Activated naive CD8-positive, alpha-beta T cell treated with anti-CD3 and anti-CD28 coated beads, Interleukin-2, amount 10 ng/mL, durations not matched to agents 7 days and 5 days (primary cell): ENCODE measurements at regions of chr16 and their contacts with region 1.

Region 1: DNA sequence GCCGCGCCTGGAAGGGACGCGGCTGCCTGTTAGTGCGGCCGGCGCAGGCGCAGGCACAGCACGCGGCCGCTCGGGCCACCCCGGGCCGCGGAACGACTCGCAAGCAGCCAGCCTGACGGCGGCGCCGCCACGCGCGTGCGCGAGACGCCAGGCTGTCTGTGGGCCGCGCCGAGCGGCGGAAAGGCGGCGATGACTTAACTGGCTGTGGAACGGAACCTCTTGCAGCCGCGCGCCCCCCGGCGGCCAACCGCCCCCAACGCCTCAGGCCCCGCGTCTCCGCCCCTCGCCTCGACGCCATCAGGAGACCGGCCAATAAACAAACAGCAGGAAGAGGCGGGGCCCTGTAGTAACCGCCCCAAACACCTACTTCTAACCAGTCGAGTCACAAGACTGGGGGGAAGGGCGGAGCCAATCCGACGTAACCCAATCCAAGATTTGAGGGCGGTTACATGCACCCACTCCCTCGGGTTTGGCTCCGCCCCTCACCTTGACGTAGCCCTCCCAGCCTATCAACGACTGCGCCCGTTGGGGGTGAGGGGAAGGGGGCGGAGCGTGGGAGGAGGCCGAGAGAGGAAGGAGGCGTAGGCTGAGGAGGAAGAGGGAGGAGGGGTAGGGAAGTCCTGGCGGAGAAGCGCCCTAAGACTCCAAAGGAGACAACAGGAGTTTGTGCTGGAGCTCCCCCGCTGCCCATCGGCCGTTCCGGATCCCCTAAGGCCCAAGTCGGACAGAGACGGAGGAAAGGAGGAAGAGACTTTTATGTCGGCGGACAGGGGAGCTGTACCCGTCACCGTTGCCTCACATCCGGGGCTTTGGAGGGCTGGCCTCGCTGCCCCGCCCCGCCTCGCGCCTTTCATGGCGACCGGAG is at the start of gene FBRS:
- DNase-seq: peak; percentile 99
- ATAC-seq: peak; percentile 69
- H3K4me3 Mint-ChIP-seq: peak within 1 kb of the TSS; percentile 93
- H3K27ac Mint-ChIP-seq: peak within 1 kb of the TSS; percentile 100
- H3K4me1 Mint-ChIP-seq: peaks cover 30% of the 10 kb centered on the region
- H3K27me3 Mint-ChIP-seq: no peaks in the 10 kb centered on the region
- total RNA-seq, gene FBRS: 140 to 143 TPM

Region 2: DNA sequence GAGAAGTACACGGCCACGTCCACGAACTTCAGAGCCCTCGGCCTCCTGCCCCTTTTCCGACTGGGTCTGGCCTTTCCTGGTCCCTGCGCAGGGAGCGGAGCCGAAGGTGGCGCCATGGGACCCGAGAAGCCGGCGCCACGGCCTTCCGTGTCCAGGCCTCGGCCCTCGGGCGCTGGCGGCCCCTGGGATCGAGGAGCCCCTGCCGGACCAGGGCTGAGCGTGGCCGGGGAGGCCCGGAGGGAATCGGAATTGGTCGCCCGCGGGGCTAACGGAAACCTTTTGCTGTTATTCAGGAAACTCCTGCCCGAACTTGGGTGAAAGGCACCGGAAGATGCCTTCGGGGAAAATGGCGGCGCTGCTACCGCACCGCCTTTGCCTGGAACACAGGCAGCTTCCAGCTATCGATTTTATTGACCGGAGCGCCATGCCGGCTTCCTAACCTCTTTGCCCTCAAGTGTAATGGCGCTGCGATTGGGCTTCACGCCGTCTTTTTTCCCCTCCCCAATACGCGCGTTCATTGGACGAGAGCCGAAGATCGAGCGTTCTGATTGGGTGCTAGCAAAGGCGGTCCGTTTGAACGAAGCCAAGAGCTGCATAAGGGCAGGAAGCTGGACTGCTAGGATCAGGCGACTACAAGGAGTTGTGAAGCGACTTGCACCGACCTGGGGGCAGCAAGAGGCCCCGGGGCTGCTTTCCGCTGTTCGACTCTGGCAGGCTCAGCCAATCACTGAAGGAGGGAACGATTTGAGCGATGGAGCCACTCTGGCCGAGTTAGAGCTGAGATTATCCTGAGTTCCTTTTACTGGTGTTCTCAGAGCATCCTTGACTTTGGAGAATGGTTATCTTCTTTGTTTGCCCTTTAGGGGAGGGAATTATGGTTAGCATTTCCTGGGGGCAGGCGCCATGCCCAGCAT is 47.9 kb before region 1 on chr16 and contains the start of gene ZNF689:
- POLR2A ChIA-PET with region 1: interaction called, 12 read pairs
- DNase-seq: peak; percentile 92
- ATAC-seq: peak; percentile 89
- H3K4me3 Mint-ChIP-seq: peak within 1 kb of the TSS; percentile 96
- H3K27ac Mint-ChIP-seq: peak within 1 kb of the TSS; percentile 94
- H3K4me1 Mint-ChIP-seq: peaks cover 24% of the 10 kb centered on the region
- H3K27me3 Mint-ChIP-seq: no peaks in the 10 kb centered on the region
- total RNA-seq, gene ZNF689: 12.7 to 14.4 TPM

Region 3: DNA sequence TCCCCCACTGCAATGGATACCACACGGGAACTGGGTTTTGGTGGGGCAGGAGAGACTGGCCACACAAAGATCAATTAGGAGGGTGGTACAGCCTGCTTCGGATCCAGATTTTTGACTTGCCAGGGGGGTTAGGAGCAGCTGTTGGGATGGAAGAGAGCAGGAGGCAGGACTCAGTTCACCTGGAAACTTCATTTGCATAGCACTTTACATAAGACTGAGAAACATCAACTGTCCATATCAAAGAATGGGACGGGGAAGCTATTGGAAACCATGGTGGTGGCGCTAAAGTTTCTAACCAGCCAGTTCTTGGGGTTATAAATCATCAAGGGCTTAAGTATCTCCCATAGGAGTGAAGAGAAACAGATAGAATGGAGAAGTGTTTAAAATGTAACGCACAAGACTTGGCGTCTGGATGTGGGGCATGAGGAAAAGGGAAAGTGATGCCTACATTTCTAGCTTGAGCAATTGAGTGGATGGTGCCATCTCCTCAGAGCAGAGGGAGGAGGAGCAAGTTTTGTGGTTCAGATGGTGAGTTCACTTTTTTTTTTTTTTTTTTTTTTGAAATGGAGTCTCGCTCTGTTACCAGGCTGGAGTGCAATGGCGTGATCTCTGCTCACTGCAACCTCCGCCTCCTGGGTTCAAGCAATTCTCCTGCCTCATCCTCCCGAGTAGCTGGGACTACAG is 34.4 kb after region 1 on chr16:
- POLR2A ChIA-PET with region 1: interaction called, 52 read pairs
- DNase-seq: no peak
- ATAC-seq: no peak
- H3K4me3 Mint-ChIP-seq: no peak overlapping the region
- H3K27ac Mint-ChIP-seq: no peak overlapping the region
- H3K4me1 Mint-ChIP-seq: peaks cover 19% of the 10 kb centered on the region
- H3K27me3 Mint-ChIP-seq: no peaks in the 10 kb centered on the region

Region 4: DNA sequence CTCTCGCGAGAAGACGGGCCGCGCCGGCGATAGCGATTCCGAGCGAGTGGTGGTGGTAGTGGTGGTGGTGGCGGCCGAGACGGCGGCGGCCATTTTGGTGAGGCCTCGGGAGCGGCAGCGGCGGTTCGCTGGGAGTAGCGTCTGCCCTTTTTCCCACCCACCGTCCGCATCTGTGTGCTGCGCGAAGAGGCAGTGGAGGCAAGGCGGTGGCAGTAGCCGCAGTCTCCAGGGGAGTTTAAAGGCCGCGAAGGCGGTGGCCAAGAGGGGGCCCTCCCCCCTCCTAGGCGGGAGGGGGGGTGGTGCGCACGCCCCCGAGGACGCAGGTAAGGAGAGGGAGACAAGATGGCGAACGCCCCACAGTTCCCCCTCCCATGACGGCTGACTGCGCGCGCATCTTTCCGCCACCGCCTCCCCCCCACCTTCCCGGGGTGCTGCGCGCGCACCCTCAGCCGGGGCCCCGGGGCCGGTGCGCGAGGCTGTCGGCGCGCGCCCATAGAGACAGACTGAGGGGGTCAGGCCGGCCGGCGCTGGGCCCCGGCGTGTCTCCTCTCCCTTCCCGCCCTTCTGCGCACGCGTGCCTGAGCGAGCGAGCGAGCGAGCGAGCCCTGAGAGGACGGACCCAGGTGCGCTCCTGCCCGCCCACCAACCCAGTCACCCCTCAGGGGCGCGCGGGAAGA is 40.2 kb after region 1 on chr16:
- POLR2A ChIA-PET with region 1: interaction called, 52 read pairs
- DNase-seq: peak; percentile 99
- ATAC-seq: peak; percentile 75
- H3K4me3 Mint-ChIP-seq: peak overlapping the region; percentile 100
- H3K27ac Mint-ChIP-seq: peak overlapping the region; percentile 99
- H3K4me1 Mint-ChIP-seq: peaks cover 35% of the 10 kb centered on the region
- H3K27me3 Mint-ChIP-seq: no peaks in the 10 kb centered on the region